K562 (cell line): ENCODE measurements at regions of chr7 and their contacts with region 1.

Region 1: GRCh38 chr7:54839538-54840213 is 80.7 kb upstream of the SEC61G start:
- DNase-seq: peak in 2 of 4 experiments; percentile 11 to 13
- ATAC-seq: peak; percentile 60
- H3K4me3 ChIP-seq: no peak overlapping the region
- H3K27ac ChIP-seq: no peak overlapping the region
- H3K4me1 ChIP-seq: peaks cover 0 to 5% of the 10 kb centered on the region in 2 experiments; a peak in 2 of 5 replicates
- H3K27me3 ChIP-seq: peaks cover 0 to 25% of the 10 kb centered on the region in 2 experiments; a peak in 2 of 5 replicates
- CTCF ChIP-seq: peak in 2 of 3 experiments; percentile 27 to 42; a peak in 4 of 6 replicates
- EP300 ChIP-seq: no peak
- POLR2A ChIP-seq: no peak
- RAD21 ChIP-seq: peak in 1 of 2 experiments; percentile 21; a peak in 1 of 4 replicates

Region 2: DNA sequence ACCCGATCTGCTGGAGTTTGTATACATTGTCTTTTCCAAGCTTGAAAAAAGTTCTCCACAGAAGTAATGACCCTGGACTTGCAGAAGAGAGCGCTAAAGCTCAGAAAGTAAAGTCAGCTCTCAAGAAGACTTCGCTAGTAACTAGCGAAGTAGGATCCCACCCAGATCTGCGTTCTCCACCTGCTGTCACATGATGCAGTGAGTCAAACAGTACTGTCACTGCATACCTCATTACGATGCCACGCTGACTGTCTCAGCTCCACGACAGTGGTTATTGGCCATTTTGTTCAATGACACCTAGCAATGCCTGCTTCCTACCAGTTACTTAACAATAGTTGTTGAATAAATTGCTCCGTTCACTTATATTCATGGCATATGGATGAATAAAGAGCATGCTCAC is 51.0 kb before region 1 on chr7:
- CTCF ChIA-PET with region 1: no interaction called
- POLR2A ChIA-PET with region 1: no interaction called
- in situ Hi-C with region 1: no loop called
- intact Hi-C with region 1: loop called (anchors 5 kb)
- DNase-seq: peak in 3 of 4 experiments; percentile 14 to 60 (median 40)
- ATAC-seq: peak; percentile 86
- H3K4me3 ChIP-seq: no peak overlapping the region
- H3K27ac ChIP-seq: no peak overlapping the region
- H3K4me1 ChIP-seq: no peaks in the 10 kb centered on the region
- H3K27me3 ChIP-seq: peaks cover 0 to 26% of the 10 kb centered on the region in 2 experiments; a peak in 2 of 5 replicates
- CTCF ChIP-seq: peak; percentile 49 to 61 (median 57)
- EP300 ChIP-seq: no peak
- POLR2A ChIP-seq: no peak
- RAD21 ChIP-seq: peak; percentile 47 to 68